Psoas muscle (tissue), 8 donors: ENCODE measurements at regions of chr18 and their contacts with region 1.

Region 1: DNA sequence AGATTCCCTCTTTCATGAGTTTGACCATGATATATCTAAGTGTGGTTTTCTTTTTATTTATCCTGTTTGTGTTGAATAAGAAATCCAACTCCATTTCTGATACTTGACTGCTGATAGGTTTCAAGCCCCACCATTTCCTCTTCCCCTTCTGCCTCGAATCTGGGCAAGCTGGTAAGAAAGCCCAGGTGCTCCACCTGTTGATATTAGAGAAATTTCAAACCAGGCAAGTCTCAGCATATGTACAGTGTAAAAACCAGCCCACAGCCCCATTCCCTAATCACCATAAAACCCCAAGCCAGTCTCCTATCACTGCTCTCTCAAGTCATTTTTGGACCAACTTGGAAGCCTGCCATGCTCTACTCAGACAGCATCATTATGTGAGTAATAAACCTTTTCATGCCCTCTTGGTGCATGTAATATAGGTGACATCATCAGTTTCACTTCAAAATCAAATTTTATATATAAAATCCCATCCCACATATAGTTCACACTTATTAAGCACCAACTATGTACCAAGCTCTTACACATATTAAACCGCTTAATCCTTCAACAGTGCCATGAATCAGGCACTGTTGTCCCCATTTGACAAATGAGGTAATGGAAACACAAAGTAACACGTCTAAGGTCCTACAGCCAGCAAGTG is 46.6 kb downstream of the SMAD2 start:
- DNase-seq: no peak
- ATAC-seq: peak in 3 of 4 donors; percentile 35 to 36 (median 35)
- H3K4me3 ChIP-seq: no peak overlapping the region
- H3K27ac ChIP-seq: no peak overlapping the region
- H3K4me1 ChIP-seq: peaks cover 15% of the 10 kb centered on the region
- H3K27me3 ChIP-seq: no peaks in the 10 kb centered on the region
- CTCF ChIP-seq: no peak

Region 2: DNA sequence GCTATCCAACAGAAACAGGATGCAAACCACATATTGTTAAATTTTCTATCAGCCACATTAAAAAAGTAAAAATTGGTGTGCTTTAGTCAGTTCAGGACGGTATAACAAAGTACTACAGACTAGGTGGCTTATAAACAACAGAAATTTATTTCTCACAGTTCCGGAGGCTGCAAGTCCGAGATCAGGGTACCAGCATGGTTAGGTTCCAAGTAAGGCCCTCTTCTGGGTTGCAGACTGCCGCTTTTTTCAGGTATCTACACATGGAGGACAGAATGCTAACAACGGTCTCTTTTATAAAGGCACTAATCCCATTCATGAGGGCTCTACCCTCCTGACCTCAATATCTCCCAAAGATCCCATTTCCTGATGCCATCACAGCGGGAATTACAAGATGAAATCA is 36.0 kb after region 1 on chr18:
- intact Hi-C with region 1: loop called in 1 of 2 experiments (anchors 5 kb)
- DNase-seq: no peak
- ATAC-seq: no peak
- H3K4me3 ChIP-seq: no peak overlapping the region
- H3K27ac ChIP-seq: no peak overlapping the region
- H3K4me1 ChIP-seq: peaks cover 27% of the 10 kb centered on the region
- H3K27me3 ChIP-seq: no peaks in the 10 kb centered on the region
- CTCF ChIP-seq: no peak